ENCODE measurements at regions of chr1 and their contacts with region 1.

Region 1: GRCh38 chr1:179229214-179230140 is at the start of gene ABL2:
- DNase-seq: peak; percentile 47
- H3K4me3 Mint-ChIP-seq: peak within 1 kb of the TSS; percentile 88
- H3K27ac Mint-ChIP-seq: peak within 1 kb of the TSS; percentile 80
- H3K4me1 Mint-ChIP-seq: peaks cover 31% of the 10 kb centered on the region
- H3K27me3 Mint-ChIP-seq: no peaks in the 10 kb centered on the region
- total RNA-seq, gene ABL2: 9.5 and 11.4 TPM in 2 replicates

Region 2: GRCh38 chr1:179034720-179035119 is 194.8 kb before region 1 on chr1:
- intact Hi-C with region 1: loop called (anchors 1 kb)
- DNase-seq: no peak
- H3K4me3 Mint-ChIP-seq: no peak overlapping the region
- H3K27ac Mint-ChIP-seq: peak overlapping the region; percentile 82
- H3K4me1 Mint-ChIP-seq: peaks cover 80% of the 10 kb centered on the region
- H3K27me3 Mint-ChIP-seq: no peaks in the 10 kb centered on the region

Region 3: DNA sequence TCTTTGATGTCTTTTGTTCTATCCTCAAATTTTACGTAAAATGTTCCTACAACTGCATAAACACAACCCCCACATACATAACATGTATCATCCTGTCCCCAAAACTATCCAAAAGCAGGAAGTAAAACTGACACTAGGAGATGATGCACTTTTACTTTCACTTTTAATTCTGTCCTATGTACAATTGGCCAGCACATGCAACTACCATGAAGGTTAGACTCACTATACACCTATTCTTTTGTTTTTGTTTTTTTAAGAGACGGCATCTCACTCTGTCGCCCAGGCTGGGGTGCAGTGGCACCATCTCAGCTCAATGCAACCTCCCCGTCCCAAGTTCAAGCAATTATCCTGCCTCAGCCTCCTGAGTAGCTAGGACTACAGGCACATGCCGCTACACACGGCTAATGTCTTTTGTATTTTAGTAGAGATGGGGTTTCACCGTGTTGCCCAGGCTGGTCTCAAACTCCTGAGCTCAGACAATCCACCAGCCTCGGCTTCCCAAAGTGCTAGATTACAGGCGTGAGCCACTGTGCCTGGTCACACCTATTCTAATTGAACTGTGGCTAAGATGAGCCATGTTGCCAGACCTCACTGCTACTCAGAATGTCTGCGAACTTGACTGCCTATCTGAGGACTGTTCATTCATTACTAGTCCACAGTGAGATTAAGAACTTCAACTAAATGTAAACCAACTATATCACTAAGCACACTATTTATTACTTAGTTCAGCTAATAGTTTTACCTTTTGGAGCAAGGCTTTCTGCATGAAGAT is 99.6 kb before region 1 on chr1:
- intact Hi-C with region 1: loop called (anchors 1 kb)
- DNase-seq: no peak
- H3K4me3 Mint-ChIP-seq: peak overlapping the region; percentile 64
- H3K27ac Mint-ChIP-seq: peak overlapping the region; percentile 88
- H3K4me1 Mint-ChIP-seq: peaks cover 18% of the 10 kb centered on the region
- H3K27me3 Mint-ChIP-seq: no peaks in the 10 kb centered on the region

Region 4: GRCh38 chr1:179142889-179143299 is 86.6 kb before region 1 on chr1:
- intact Hi-C with region 1: loop called (anchors 2 kb)
- DNase-seq: no peak
- H3K4me3 Mint-ChIP-seq: peak overlapping the region; percentile 63
- H3K27ac Mint-ChIP-seq: no peak overlapping the region
- H3K4me1 Mint-ChIP-seq: peaks cover 31% of the 10 kb centered on the region
- H3K27me3 Mint-ChIP-seq: no peaks in the 10 kb centered on the region

Region 5: DNA sequence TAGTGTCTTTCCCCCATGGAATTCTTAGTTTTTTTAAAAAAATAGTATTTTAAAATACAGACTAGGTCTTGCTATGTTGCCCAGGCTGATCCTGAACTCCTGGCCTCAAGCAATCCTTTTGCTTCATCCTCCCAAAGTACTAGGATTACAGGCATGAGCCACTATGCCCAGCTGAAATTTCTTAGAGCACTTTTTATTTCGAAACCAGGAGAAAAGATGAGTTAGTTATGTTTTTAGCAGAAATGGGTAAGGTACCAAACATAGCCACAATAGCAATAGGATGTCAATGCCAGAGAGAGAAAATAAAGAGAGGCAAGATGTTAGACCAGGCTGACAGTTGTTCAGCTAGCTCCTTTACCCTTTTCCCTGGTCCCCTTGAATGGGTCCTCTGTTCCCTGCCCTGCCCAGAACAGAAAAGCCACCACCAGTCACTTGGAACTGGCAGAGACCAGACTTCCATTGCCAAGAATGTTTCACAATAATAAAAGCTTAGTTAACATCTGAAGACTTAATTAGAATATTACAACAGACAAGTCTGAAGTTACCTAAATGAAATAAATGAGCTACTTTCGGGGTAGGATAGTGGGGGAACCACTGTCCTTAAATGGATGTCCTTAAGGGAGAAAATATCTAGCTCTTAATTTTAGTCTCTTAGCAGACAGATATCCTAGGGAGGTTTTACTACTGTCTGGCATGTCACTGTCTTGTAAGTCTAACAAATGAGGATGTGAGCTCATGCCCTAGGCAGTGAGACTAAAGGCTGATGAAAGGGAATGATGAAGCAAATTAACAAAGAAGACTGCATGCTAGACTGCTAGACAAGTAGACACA is 54.3 kb before region 1 on chr1:
- intact Hi-C with region 1: loop called (anchors 10 kb)
- DNase-seq: no peak
- H3K4me3 Mint-ChIP-seq: no peak overlapping the region
- H3K27ac Mint-ChIP-seq: no peak overlapping the region
- H3K4me1 Mint-ChIP-seq: no peaks in the 10 kb centered on the region
- H3K27me3 Mint-ChIP-seq: no peaks in the 10 kb centered on the region

Region 6: GRCh38 chr1:179217943-179218507 is 11.5 kb before region 1 on chr1:
- intact Hi-C with region 1: loop called (anchors 2 kb)
- DNase-seq: no peak
- H3K4me3 Mint-ChIP-seq: no peak overlapping the region
- H3K27ac Mint-ChIP-seq: no peak overlapping the region
- H3K4me1 Mint-ChIP-seq: peaks cover 14% of the 10 kb centered on the region
- H3K27me3 Mint-ChIP-seq: no peaks in the 10 kb centered on the region

Region 7: DNA sequence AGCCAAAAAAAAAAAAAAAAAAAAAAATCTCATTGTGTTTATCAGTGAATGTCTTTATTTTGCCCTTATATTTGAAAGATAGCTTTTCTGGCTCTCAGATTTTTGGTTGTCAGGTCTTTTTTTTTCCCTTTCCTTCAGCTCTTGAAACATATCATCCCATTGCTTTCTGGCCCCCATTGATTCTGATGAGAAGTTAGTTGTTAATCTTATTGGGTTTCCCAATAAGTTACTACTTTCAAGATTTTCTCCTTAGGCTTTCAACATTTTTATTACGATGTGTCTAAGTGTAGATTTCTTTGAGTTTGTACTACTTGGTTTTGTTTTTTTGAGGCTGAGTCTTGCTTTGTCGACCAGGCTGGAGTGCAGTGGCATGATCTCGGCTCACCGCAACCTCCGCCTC is 49.4 kb after region 1 on chr1:
- intact Hi-C with region 1: no loop called
- DNase-seq: no peak
- H3K4me3 Mint-ChIP-seq: no peak overlapping the region
- H3K27ac Mint-ChIP-seq: no peak overlapping the region
- H3K4me1 Mint-ChIP-seq: no peaks in the 10 kb centered on the region
- H3K27me3 Mint-ChIP-seq: peaks cover 7% of the 10 kb centered on the region

Region 8: GRCh38 chr1:179293340-179294327 is 64.2 kb after region 1 on chr1 and contains the start of gene SOAT1:
- intact Hi-C with region 1: loop called (anchors 1 kb)
- DNase-seq: peak; percentile 88
- H3K4me3 Mint-ChIP-seq: peak within 1 kb of the TSS; percentile 99
- H3K27ac Mint-ChIP-seq: peak within 1 kb of the TSS; percentile 96
- H3K4me1 Mint-ChIP-seq: peaks cover 41% of the 10 kb centered on the region
- H3K27me3 Mint-ChIP-seq: no peaks in the 10 kb centered on the region
- total RNA-seq, gene SOAT1: 48.7 and 49.0 TPM in 2 replicates